ENCODE measurements at regions of chr9 and their contacts with region 1.

Region 1: GRCh38 chr9:137423004-137423874 is at the starts of genes EXD3 and NOXA1:
- DNase-seq: peak; percentile 95 to 96
- ATAC-seq: peak; percentile 96 to 99 (median 97)
- H3K4me3 ChIP-seq: peak within 1 kb of the TSS; percentile 63
- H3K4me3 Mint-ChIP-seq: peak within 1 kb of the TSS; percentile 83
- H3K27ac ChIP-seq: peak within 1 kb of the TSS; percentile 11
- H3K27ac Mint-ChIP-seq: peak within 1 kb of the TSS; percentile 60 to 67
- H3K4me1 ChIP-seq: peaks cover 17% of the 10 kb centered on the region
- H3K4me1 Mint-ChIP-seq: peaks cover 0 to 5% of the 10 kb centered on the region in 2 donors
- H3K27me3 ChIP-seq: no peaks in the 10 kb centered on the region
- H3K27me3 Mint-ChIP-seq: no peaks in the 10 kb centered on the region
- CTCF ChIP-seq: peak; percentile 66
- total RNA-seq, gene EXD3: 28.0 to 35.3 (median 29.6) TPM
- total RNA-seq, gene NOXA1: 4.7 to 10.0 (median 7.7) TPM

Region 2: DNA sequence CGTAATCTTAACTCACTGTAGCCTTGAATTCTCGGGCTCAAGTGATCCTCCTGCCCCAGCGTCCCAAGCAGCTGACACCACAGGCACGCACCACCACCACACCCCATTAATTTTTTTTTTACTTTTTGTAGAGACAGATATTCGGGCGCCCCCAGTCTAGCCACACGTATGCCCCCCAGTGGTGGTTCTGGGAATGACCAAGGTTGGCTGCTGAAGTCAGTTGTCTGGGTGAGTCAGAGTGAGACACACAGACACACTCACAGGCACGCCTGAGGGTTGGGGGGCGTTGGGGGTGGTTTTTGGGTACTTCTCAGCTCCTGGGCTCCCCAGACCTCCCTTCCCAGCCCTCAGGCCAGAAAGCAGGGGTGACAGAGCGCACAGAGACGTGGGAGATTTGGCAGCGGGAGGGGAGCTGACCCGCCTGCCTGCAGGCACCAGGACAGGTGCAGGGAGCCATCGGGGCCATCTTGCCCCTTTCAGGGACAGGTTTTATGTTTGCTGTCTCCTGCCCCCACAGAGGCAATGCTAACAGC is 22.1 kb after region 1 on chr9:
- intact Hi-C with region 1: loop called (anchors 1 kb)
- DNase-seq: peak; percentile 83 to 91
- ATAC-seq: peak; percentile 79 to 91 (median 87)
- H3K4me3 ChIP-seq: no peak overlapping the region
- H3K4me3 Mint-ChIP-seq: peak overlapping the region; percentile 5
- H3K27ac ChIP-seq: no peak overlapping the region
- H3K27ac Mint-ChIP-seq: peak overlapping the region in 1 of 2 donors; percentile 53
- H3K4me1 ChIP-seq: peaks cover 37% of the 10 kb centered on the region
- H3K4me1 Mint-ChIP-seq: peaks cover 16 to 26% of the 10 kb centered on the region in 2 donors
- H3K27me3 ChIP-seq: peaks cover 6% of the 10 kb centered on the region
- H3K27me3 Mint-ChIP-seq: peaks cover 7 to 10% of the 10 kb centered on the region in 2 donors
- CTCF ChIP-seq: peak; percentile 79

Region 3: GRCh38 chr9:137461663-137462395 is 38.6 kb after region 1 on chr9:
- intact Hi-C with region 1: loop called (anchors 5 kb)
- DNase-seq: peak; percentile 89 to 92
- ATAC-seq: peak; percentile 65 to 82 (median 79)
- H3K4me3 ChIP-seq: peak overlapping the region; percentile 29
- H3K4me3 Mint-ChIP-seq: peak overlapping the region; percentile 73
- H3K27ac ChIP-seq: peak overlapping the region; percentile 92
- H3K27ac Mint-ChIP-seq: peak overlapping the region; percentile 70 to 87
- H3K4me1 ChIP-seq: peaks cover 51% of the 10 kb centered on the region
- H3K4me1 Mint-ChIP-seq: peaks cover 0 to 39% of the 10 kb centered on the region in 2 donors
- H3K27me3 ChIP-seq: no peaks in the 10 kb centered on the region
- H3K27me3 Mint-ChIP-seq: no peaks in the 10 kb centered on the region
- CTCF ChIP-seq: no peak

Region 4: DNA sequence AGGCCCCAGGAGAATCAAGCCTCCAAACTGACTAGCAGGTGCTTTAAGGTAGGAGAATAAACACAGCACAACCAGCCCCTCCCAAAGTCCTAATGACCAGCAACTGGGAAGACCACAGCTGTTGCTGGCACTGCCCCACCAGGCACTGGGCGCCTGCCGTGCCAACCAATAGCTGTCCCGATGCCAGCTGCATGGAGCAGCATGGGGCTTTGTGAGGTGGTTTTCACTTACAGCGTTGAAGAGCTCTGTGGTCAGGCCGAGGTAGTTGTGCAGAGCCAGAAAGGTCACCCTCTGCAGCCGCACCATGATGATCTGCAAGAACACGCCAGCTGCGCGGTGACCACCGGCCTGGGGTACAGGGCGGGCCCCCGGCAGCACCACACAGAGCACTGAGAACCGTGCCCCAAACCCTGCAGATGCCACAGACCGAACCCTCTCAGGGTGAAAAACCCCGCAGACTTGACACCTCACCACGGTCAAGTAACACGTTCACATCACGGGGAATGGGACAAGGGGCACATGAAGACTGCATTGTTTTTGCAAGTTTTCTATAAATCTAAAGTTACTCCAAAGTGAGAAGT is 98.3 kb after region 1 on chr9:
- intact Hi-C with region 1: loop called (anchors 2 kb)
- DNase-seq: no peak
- ATAC-seq: peak; percentile 55 to 75 (median 59)
- H3K4me3 ChIP-seq: no peak overlapping the region
- H3K4me3 Mint-ChIP-seq: peak overlapping the region; percentile 42
- H3K27ac ChIP-seq: no peak overlapping the region
- H3K27ac Mint-ChIP-seq: peak overlapping the region in 1 of 2 donors; percentile 24
- H3K4me1 ChIP-seq: peaks cover 16% of the 10 kb centered on the region
- H3K4me1 Mint-ChIP-seq: peaks cover 12 to 14% of the 10 kb centered on the region in 2 donors
- H3K27me3 ChIP-seq: no peaks in the 10 kb centered on the region
- H3K27me3 Mint-ChIP-seq: no peaks in the 10 kb centered on the region
- CTCF ChIP-seq: no peak

Measured in natural killer cell (primary cell).